PC-9 (cell line): ENCODE measurements at regions of chr3 and their contacts with region 1.

Region 1: DNA sequence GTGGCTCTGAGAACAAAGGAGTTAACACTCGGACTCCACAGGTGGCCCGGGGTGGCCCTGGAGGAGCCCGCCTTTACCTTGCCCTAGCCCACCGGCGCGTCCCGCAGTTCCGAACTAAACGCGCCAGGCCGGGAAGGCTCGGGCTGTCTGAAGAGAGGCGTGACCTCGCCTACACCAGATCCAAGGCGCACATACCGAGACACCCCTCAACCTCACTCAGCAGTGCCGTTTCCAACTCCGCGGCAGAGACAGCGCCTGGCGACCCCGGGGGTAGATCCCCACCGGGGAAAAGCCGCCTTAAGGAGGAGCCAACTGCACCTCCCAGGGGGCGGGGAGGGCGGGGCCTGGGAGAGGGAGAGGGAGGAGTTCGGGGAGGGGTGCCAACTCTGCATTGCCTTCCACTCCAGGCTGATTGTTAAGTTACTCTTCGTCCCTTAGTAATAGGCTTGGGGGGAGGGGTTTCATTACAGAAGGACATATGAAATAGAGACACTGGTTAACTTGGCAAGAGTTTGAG is at the start of gene DLG1:
- DNase-seq: peak; percentile 93
- H3K4me3 ChIP-seq: peak within 1 kb of the TSS; percentile 62
- H3K27ac ChIP-seq: peak within 1 kb of the TSS; percentile 81
- H3K4me1 ChIP-seq: peaks cover 57% of the 10 kb centered on the region
- H3K27me3 ChIP-seq: no peaks in the 10 kb centered on the region
- CTCF ChIP-seq: 0 out of 2 replicates have a peak, but pooled peaks have one; percentile 22
- total RNA-seq, gene DLG1: 193 and 201 TPM in 2 replicates

Region 2: GRCh38 chr3:197270558-197271317 is 27.7 kb before region 1 on chr3:
- CTCF ChIA-PET with region 1: no interaction called
- POLR2A ChIA-PET with region 1: no interaction called
- intact Hi-C with region 1: no loop called
- DNase-seq: no peak
- H3K4me3 ChIP-seq: no peak overlapping the region
- H3K27ac ChIP-seq: peak overlapping the region; percentile 26
- H3K4me1 ChIP-seq: peaks cover 26% of the 10 kb centered on the region
- H3K27me3 ChIP-seq: no peaks in the 10 kb centered on the region
- CTCF ChIP-seq: no peak

Region 3: GRCh38 chr3:197487908-197488391 is 189.6 kb after region 1 on chr3:
- CTCF ChIA-PET with region 1: no interaction called
- POLR2A ChIA-PET with region 1: interaction called, 11 read pairs
- intact Hi-C with region 1: loop called (anchors 1 kb)
- DNase-seq: peak; percentile 94 to 97
- H3K4me3 ChIP-seq: peak overlapping the region; percentile 3; the same call in 1 of the 2 replicates
- H3K27ac ChIP-seq: peak overlapping the region; percentile 71
- H3K4me1 ChIP-seq: peaks cover 67% of the 10 kb centered on the region
- H3K27me3 ChIP-seq: no peaks in the 10 kb centered on the region
- CTCF ChIP-seq: no peak

Region 4: GRCh38 chr3:197511130-197511529 is 212.7 kb after region 1 on chr3:
- CTCF ChIA-PET with region 1: no interaction called
- POLR2A ChIA-PET with region 1: no interaction called
- intact Hi-C with region 1: loop called (anchors 2 kb)
- DNase-seq: no peak
- H3K4me3 ChIP-seq: no peak overlapping the region
- H3K27ac ChIP-seq: no peak overlapping the region
- H3K4me1 ChIP-seq: peaks cover 16% of the 10 kb centered on the region
- H3K27me3 ChIP-seq: no peaks in the 10 kb centered on the region
- CTCF ChIP-seq: no peak